ENCODE measurements at regions of chr12 and their contacts with region 1.

Region 1: DNA sequence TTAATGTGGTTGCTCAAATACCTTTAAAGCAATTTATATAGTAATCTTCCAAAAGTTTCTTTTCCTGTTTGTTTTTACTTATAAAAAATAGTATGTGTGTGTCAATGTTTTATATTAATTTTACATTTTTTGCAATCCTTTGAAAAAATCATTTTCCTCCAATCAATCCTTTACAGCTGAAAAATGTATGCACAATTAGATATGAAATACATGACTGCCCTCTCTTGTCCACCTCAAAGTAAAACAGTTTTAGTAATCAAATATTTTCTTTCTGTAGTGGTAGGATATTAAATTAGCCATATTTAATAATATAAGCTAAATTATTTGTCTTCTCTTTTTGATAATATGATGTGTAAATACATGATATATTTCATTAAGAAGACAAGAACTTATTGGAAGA is 269.9 kb downstream of the ADAMTS20 start:
- DNase-seq: peak; percentile 31
- H3K4me3 ChIP-seq: no peak overlapping the region
- CTCF ChIP-seq: no peak

Region 2: DNA sequence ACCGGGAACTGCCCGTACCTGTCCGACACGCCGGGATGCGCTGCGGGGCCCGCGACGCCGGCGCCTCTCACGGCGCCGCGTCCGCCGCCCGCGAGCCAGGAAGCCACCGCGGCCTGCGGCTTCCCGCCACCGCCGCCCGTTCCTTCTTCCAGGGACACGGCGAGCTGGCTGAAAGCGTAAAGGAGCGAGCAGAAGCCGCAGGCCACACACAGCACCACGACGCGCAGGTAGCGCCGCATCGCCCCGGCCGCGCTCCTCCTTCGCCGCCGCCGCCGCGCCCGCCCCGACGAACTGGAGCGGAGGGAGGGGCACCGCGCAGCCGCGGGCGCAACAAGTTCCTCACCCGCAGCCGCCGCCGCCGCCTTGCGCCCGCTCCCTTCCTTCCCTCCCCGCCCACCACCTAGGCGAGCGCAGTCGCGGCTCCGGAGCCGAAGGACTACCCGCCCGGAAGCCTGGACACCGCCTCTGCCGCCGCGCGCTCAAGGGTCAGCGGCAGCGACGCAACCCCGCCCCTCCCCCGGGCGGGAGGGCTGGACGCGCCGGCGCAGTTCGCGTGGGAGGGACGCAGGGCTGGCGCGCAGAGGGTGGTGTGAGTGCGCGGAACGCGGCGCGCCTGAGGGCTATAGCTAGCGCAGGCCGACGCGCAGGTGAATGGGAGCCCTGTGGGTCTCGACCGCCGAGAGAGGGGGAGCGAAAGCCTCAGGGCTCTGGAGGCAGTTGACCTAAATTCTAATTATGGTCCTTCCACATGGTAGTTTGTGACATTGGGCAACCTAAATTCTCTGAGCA is 1137.5 kb before region 1 on chr12 and contains the start of gene GXYLT1:
- in situ Hi-C with region 1: loop called (anchors 25 kb)
- DNase-seq: peak; percentile 70
- H3K4me3 ChIP-seq: peak within 1 kb of the TSS; percentile 64
- CTCF ChIP-seq: no peak

Region 3: GRCh38 chr12:42482445-42483237 is 799.5 kb before region 1 on chr12:
- in situ Hi-C with region 1: loop called (anchors 25 kb)
- DNase-seq: no peak
- H3K4me3 ChIP-seq: peak overlapping the region; percentile 66
- CTCF ChIP-seq: peak; percentile 86

Region 4: GRCh38 chr12:42705863-42706262 is 576.2 kb before region 1 on chr12:
- in situ Hi-C with region 1: loop called (anchors 10 kb)
- DNase-seq: peak; percentile 99
- H3K4me3 ChIP-seq: no peak overlapping the region
- CTCF ChIP-seq: no peak

Region 5: DNA sequence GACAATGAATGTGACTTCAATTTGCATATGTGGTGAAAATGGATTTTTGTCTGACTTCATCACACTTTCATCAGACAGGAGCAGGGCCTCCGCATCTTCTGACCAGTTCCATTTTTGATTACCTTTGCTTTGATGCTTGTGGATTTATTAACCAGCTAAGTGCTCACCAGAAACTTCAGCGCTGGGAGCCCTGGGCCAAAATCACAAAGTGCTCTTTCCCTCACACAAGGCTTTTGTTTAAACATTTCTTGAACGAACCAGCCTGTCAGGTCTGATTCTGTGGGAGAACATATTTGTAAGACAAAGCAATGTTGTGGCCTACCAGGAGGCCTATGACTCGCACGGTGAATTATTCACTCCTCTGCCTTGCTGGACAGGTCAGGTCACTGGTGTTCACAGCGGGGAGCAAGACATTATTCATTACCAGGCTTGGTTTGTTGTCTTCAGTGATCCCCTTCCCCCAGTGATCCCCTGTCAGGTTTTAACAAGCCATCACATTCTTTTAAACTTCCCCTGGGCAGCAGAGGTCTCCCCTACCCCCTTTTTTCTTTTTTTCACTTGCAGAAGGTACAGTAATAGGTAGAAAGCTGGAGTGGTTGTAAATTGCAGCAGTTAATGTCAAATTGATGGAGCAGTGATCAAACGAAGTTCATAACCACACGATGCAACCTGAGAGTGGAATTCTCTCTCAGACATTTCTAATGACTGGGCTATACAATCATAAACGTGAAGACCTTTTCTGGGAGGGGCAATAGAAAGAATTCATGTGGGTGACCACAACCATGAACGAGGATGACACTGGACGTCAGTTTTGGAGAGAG is 525.1 kb before region 1 on chr12:
- in situ Hi-C with region 1: loop called (anchors 25 kb)
- DNase-seq: peak; percentile 99
- H3K4me3 ChIP-seq: no peak overlapping the region
- CTCF ChIP-seq: no peak

Region 6: GRCh38 chr12:43179486-43179885 is 102.6 kb before region 1 on chr12:
- in situ Hi-C with region 1: no loop called
- DNase-seq: no peak
- H3K4me3 ChIP-seq: no peak overlapping the region
- CTCF ChIP-seq: no peak

Measured in astrocyte of the cerebellum (primary cell).